ENCODE measurements at regions of chr12 and their contacts with region 1.

Region 1: DNA sequence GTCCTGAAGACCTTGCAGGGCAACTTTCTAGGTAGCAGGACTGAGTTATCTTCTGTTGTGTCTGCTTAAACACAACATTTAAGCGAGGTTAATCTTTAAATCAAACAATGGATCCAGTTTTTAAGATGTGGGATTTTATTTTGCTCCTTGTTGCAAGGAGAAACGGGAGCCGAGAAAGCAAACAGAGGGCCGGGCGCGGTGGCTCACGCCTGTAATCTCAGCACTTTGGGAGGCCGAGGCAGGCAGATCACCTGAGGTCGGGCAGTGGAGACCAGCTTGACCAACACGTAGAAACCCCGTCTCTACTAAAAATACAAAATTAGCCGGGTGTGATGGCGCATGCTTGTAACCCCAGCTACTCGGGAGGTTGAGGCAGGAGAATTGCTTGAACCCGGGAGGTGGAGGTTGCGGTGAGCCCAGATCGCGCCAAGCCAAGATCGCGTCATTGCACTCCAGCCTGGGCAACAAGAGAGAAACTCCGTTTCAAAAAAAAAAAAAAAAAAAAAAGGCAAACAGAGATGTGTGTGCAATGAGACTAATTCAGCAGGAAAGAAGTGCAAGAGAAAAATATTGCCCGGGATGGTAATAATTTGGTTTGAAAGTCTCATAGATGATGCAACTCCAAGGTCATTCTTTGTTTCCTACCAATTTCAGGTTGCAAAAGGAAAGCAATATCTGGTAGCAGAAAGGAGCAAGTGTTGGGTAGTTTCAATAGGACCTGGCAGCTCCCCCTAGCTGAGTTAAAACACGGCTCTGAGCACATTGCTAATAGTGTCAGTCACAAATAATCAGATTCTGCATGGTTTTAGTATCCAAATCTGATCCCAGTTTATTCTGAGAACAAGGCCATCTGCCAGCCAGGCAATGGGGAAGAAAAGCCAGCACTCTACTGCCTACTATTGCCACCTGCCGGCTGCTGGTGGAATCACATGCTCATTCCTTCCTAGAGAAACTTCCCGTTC is 141.4 kb downstream of the PPM1H start:
- DNase-seq: peak; percentile 83 to 89
- ATAC-seq: peak; percentile 84 to 94 (median 88)
- H3K4me3 ChIP-seq: peak overlapping the region; percentile 42
- H3K27ac ChIP-seq: no peak overlapping the region
- H3K4me1 ChIP-seq: peaks cover 11% of the 10 kb centered on the region
- H3K27me3 ChIP-seq: no peaks in the 10 kb centered on the region
- CTCF ChIP-seq: peak; percentile 99

Region 2: GRCh38 chr12:62581288-62582064 is 212.1 kb before region 1 on chr12:
- intact Hi-C with region 1: loop called (anchors 1 to 2 kb)
- DNase-seq: no peak
- ATAC-seq: peak; percentile 42 to 86 (median 72)
- H3K4me3 ChIP-seq: no peak overlapping the region
- H3K27ac ChIP-seq: no peak overlapping the region
- H3K4me1 ChIP-seq: no peaks in the 10 kb centered on the region
- H3K27me3 ChIP-seq: no peaks in the 10 kb centered on the region
- CTCF ChIP-seq: peak; percentile 74

Region 3: GRCh38 chr12:62603061-62603810 is 190.3 kb before region 1 on chr12:
- intact Hi-C with region 1: loop called (anchors 5 kb)
- DNase-seq: peak; percentile 88 to 95
- ATAC-seq: peak; percentile 92 to 94 (median 93)
- H3K4me3 ChIP-seq: peak overlapping the region; percentile 90
- H3K27ac ChIP-seq: peak overlapping the region; percentile 99
- H3K4me1 ChIP-seq: peaks cover 24% of the 10 kb centered on the region
- H3K27me3 ChIP-seq: no peaks in the 10 kb centered on the region
- CTCF ChIP-seq: peak; percentile 53

Region 4: DNA sequence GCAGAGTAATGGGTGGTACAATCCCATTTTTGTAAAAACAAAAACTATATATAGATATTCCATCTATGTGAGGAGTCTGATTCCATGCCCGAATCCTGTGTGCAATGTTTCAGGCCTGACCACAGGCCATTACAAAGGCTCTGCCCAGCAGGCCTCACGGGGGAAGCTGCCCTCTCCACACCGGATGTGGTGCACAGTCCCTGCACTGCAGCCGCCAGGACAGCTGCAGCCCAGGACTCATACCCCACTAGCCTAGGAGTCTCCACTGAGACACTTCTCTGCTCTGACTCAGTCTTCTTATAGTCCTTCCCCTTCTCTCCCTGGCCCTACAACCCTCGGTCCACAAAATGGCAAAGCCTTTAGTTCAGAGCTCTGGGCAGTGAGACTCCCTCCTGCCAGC is 49.0 kb before region 1 on chr12:
- intact Hi-C with region 1: no loop called
- DNase-seq: peak; percentile 44 to 56
- ATAC-seq: peak in 3 of 4 donors; percentile 51 to 82 (median 57)
- H3K4me3 ChIP-seq: no peak overlapping the region
- H3K27ac ChIP-seq: no peak overlapping the region
- H3K4me1 ChIP-seq: no peaks in the 10 kb centered on the region
- H3K27me3 ChIP-seq: no peaks in the 10 kb centered on the region
- CTCF ChIP-seq: no peak